ENCODE measurements at regions of chr6 and their contacts with region 1.

Region 1: GRCh38 chr6:149648148-149649145 is at the start of gene KATNA1:
- DNase-seq: peak; percentile 89 to 94
- ATAC-seq: peak; percentile 96 to 97 (median 96)
- H3K4me3 ChIP-seq: peak within 1 kb of the TSS; percentile 83
- H3K27ac ChIP-seq: peak within 1 kb of the TSS; percentile 92
- H3K4me1 ChIP-seq: peaks cover 14% of the 10 kb centered on the region
- H3K27me3 ChIP-seq: no peaks in the 10 kb centered on the region
- CTCF ChIP-seq: no peak
- total RNA-seq, gene KATNA1: 10.7 to 24.5 (median 16.4) TPM

Region 2: GRCh38 chr6:149565527-149566409 is 82.7 kb before region 1 on chr6 and contains the start of gene GINM1:
- intact Hi-C with region 1: loop called in 1 of 2 experiments (anchors 5 kb)
- DNase-seq: peak; percentile 93 to 97
- ATAC-seq: peak; percentile 94 to 95 (median 94)
- H3K4me3 ChIP-seq: peak within 1 kb of the TSS; percentile 97
- H3K27ac ChIP-seq: peak within 1 kb of the TSS; percentile 96
- H3K4me1 ChIP-seq: peaks cover 17% of the 10 kb centered on the region
- H3K27me3 ChIP-seq: no peaks in the 10 kb centered on the region
- CTCF ChIP-seq: peak; percentile 68
- total RNA-seq, gene GINM1: 26.8 to 39.0 (median 30.5) TPM

Region 3: DNA sequence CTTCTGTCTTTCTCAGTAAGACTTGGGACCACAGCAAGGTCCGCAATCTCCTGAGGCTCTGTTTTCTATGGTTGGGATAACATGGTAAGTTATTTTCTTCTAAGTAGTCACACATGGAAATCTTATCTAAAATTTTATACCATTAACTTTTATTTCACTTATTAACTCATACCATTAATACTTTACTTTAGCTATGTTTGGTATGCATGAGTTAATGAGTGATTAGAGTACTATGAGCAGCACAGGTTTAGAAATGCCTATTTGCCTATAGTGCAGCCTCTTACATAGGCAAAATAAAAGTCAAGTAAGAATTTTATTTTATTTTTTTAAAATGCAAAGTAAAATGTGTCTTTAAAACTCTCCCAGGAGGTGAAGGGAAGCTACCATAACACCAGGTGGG is 55.0 kb before region 1 on chr6:
- intact Hi-C with region 1: no loop called
- DNase-seq: no peak
- ATAC-seq: no peak
- H3K4me3 ChIP-seq: no peak overlapping the region
- H3K27ac ChIP-seq: no peak overlapping the region
- H3K4me1 ChIP-seq: no peaks in the 10 kb centered on the region
- H3K27me3 ChIP-seq: no peaks in the 10 kb centered on the region
- CTCF ChIP-seq: no peak

Region 4: GRCh38 chr6:149683256-149683859 is 34.9 kb after region 1 on chr6:
- intact Hi-C with region 1: loop called in 1 of 2 experiments (anchors 5 kb)
- DNase-seq: no peak
- ATAC-seq: peak; percentile 94 to 96 (median 96)
- H3K4me3 ChIP-seq: peak overlapping the region; percentile 42
- H3K27ac ChIP-seq: peak overlapping the region; percentile 90
- H3K4me1 ChIP-seq: peaks cover 44% of the 10 kb centered on the region
- H3K27me3 ChIP-seq: no peaks in the 10 kb centered on the region
- CTCF ChIP-seq: no peak

Region 5: DNA sequence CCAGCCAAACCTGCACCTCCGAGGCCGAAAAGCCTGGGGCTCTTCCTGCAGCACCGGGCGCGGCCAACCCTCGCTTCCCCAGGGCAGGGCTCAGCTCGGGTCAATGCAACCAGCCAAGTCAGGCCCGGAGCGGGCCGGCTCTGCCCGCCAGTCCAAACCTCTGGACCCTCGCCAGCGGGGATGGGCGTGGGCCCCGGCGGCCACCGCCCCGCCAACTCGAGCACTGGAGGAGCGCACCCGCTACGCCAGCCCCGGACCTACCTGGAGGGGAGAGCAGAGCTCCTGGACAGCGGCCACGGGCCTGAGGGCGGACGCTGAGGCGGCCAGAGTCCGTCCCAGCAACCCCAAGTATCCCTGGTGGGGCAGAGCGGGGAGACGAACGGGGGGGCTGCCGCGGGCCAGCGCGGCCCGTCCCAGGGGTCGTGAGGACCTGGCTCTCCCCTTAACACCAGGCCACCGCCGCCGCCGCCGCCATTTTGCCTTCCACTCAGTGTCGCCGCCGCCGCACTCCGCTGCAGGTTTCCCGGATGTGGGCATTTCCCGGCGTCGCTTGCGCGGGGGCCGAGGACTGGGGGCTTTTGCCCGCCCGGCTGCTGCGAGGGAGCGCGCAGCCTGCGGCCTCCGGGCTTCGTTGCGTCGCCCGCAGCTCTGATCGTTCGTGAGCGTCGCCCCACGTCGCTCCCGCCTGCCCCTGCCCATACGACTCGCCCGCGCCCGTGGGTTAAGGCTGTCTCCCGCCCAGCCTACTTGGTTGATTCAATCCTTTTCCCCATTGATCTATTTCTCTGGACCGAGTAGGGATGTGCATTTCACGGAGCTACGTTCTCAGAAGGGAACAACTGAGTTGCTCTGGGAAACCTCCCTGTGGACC is 69.4 kb after region 1 on chr6 and contains the start of gene LATS1:
- intact Hi-C with region 1: loop called in 1 of 2 experiments (anchors 5 kb)
- DNase-seq: peak; percentile 94 to 95
- ATAC-seq: peak; percentile 93 to 95 (median 94)
- H3K4me3 ChIP-seq: peak within 1 kb of the TSS; percentile 99
- H3K27ac ChIP-seq: peak within 1 kb of the TSS; percentile 100
- H3K4me1 ChIP-seq: peaks cover 33% of the 10 kb centered on the region
- H3K27me3 ChIP-seq: no peaks in the 10 kb centered on the region
- CTCF ChIP-seq: no peak
- total RNA-seq, gene LATS1: 11.0 to 15.5 (median 13.9) TPM

Measured in psoas muscle (tissue), 8 donors.